Activated CD8-positive, alpha-beta T cell treated with anti-CD3 and anti-CD28 coated beads for 36 hours (primary cell): ENCODE measurements at regions of chr6 and their contacts with region 1.

Region 1: DNA sequence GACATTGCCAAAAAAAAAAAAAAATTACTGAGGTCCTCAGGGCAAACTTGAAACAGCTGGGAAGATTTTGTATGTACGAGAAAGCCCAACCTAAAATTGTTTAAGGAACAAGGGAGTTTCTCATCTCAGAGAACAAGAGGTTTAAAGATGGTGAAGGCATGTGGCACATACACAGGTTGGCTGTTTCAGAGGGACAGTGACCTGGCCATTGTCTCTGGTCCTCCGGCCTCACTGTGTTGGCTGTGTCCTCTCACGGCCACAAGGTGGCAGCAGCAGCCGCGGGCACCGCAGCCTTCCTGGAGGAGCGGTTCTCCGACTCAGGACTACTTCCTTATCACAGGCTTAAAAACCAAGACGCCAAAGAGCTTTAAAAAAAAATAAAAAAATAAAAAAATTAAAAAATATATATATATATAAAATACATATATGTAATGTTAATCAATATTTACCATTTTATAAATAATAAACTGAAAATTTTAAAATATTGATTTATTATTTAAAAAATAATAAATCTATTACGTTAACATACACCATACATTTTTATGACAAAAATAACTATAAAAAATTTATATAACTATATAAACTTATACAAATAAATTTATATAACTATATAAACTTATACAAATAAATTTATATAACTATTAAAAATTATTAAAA is 52.8 kb downstream of the GTF2H5 start:
- DNase-seq: peak; percentile 82
- ATAC-seq: peak; percentile 99
- H3K4me3 Mint-ChIP-seq: no peak overlapping the region
- H3K27ac Mint-ChIP-seq: no peak overlapping the region
- H3K4me1 Mint-ChIP-seq: no peaks in the 10 kb centered on the region
- H3K27me3 Mint-ChIP-seq: no peaks in the 10 kb centered on the region
- CTCF ChIP-seq: peak; percentile 94

Region 2: GRCh38 chr6:158231551-158232315 is 10.8 kb after region 1 on chr6:
- CTCF ChIA-PET with region 1: interaction called, 20 read pairs
- POLR2A ChIA-PET with region 1: interaction called, 4 read pairs
- intact Hi-C with region 1: no loop called
- DNase-seq: peak; percentile 68
- ATAC-seq: peak; percentile 77
- H3K4me3 Mint-ChIP-seq: peak overlapping the region; percentile 86
- H3K27ac Mint-ChIP-seq: peak overlapping the region; percentile 85
- H3K4me1 Mint-ChIP-seq: peaks cover 30% of the 10 kb centered on the region
- H3K27me3 Mint-ChIP-seq: no peaks in the 10 kb centered on the region
- CTCF ChIP-seq: no peak

Region 3: GRCh38 chr6:158257425-158257759 is 36.5 kb after region 1 on chr6:
- CTCF ChIA-PET with region 1: interaction called, 16 read pairs
- POLR2A ChIA-PET with region 1: no interaction called
- intact Hi-C with region 1: no loop called
- DNase-seq: no peak
- ATAC-seq: no peak
- H3K4me3 Mint-ChIP-seq: no peak overlapping the region
- H3K27ac Mint-ChIP-seq: no peak overlapping the region
- H3K4me1 Mint-ChIP-seq: peaks cover 37% of the 10 kb centered on the region
- H3K27me3 Mint-ChIP-seq: no peaks in the 10 kb centered on the region
- CTCF ChIP-seq: no peak

Region 4: GRCh38 chr6:158361961-158362669 is 141.2 kb after region 1 on chr6:
- CTCF ChIA-PET with region 1: interaction called, 12 read pairs
- POLR2A ChIA-PET with region 1: no interaction called
- intact Hi-C with region 1: no loop called
- DNase-seq: no peak
- ATAC-seq: no peak
- H3K4me3 Mint-ChIP-seq: no peak overlapping the region
- H3K27ac Mint-ChIP-seq: no peak overlapping the region
- H3K4me1 Mint-ChIP-seq: peaks cover 22% of the 10 kb centered on the region
- H3K27me3 Mint-ChIP-seq: no peaks in the 10 kb centered on the region
- CTCF ChIP-seq: no peak

Region 5: DNA sequence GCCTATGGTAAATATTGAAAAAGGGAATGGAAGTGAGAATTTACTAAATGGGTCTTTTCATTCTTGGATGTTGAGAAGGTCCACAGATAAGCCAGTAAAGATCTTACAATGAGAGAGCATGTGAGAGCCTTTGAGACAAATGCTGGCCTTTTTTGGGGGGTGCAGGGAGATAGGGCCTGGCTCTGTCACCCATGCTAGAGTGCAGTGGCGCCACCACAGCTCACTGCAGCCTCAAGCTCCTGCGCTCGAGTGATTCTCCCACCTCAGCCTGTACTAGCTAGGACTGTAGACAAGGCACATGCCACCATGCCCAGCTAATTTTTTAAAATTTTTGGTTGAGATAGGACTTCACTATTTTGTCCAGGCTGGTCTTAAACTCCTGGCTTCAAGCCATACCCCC is 275.8 kb after region 1 on chr6:
- CTCF ChIA-PET with region 1: interaction called, 20 read pairs
- POLR2A ChIA-PET with region 1: no interaction called
- intact Hi-C with region 1: no loop called
- DNase-seq: no peak
- ATAC-seq: no peak
- H3K4me3 Mint-ChIP-seq: no peak overlapping the region
- H3K27ac Mint-ChIP-seq: no peak overlapping the region
- H3K4me1 Mint-ChIP-seq: no peaks in the 10 kb centered on the region
- H3K27me3 Mint-ChIP-seq: no peaks in the 10 kb centered on the region
- CTCF ChIP-seq: no peak

Region 6: GRCh38 chr6:158545043-158545966 is 324.4 kb after region 1 on chr6:
- CTCF ChIA-PET with region 1: no interaction called
- POLR2A ChIA-PET with region 1: no interaction called
- intact Hi-C with region 1: no loop called
- DNase-seq: no peak
- ATAC-seq: no peak
- H3K4me3 Mint-ChIP-seq: no peak overlapping the region
- H3K27ac Mint-ChIP-seq: no peak overlapping the region
- H3K4me1 Mint-ChIP-seq: no peaks in the 10 kb centered on the region
- H3K27me3 Mint-ChIP-seq: peaks cover 7% of the 10 kb centered on the region
- CTCF ChIP-seq: no peak

Region 7: GRCh38 chr6:158605266-158605878 is 384.5 kb after region 1 on chr6:
- CTCF ChIA-PET with region 1: interaction called, 49 read pairs
- POLR2A ChIA-PET with region 1: no interaction called
- intact Hi-C with region 1: loop called (anchors 10 kb)
- DNase-seq: peak; percentile 75
- ATAC-seq: peak; percentile 80
- H3K4me3 Mint-ChIP-seq: no peak overlapping the region
- H3K27ac Mint-ChIP-seq: no peak overlapping the region
- H3K4me1 Mint-ChIP-seq: no peaks in the 10 kb centered on the region
- H3K27me3 Mint-ChIP-seq: no peaks in the 10 kb centered on the region
- CTCF ChIP-seq: peak; percentile 85